Common myeloid progenitor, CD34-positive (primary cell): ENCODE measurements at regions of chr4 and their contacts with region 1.

Region 1: GRCh38 chr4:88211473-88212252 is 53.2 kb upstream of the ABCG2 start:
- DNase-seq: peak; percentile 61 to 81 (median 72)
- H3K4me3 ChIP-seq: no peak overlapping the region
- H3K27ac ChIP-seq: no peak overlapping the region
- H3K4me1 ChIP-seq: peaks cover 0 to 30% (median 10%) of the 10 kb centered on the region in 4 experiments
- H3K27me3 ChIP-seq: no peaks in the 10 kb centered on the region

Region 2: DNA sequence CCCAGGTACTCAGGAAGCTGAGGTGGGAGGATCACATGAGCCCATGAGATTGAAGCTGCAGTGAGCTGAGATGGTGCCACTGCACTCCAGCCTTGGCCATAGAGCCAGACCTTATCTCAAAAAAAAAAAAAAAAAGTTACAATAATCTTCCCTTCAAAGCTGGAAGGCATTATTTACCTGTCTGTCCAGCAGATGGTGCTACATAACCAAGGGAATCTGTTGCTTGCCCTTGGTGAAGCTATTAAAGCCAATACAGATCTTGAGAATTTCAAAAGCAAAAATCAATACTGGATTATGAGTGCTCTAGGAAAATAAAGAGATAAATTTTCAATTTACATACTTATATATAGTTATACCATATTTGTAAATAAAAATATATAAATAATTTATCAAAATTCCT is 178.4 kb before region 1 on chr4:
- CTCF ChIA-PET with region 1: interaction called, 46 read pairs
- POLR2A ChIA-PET with region 1: no interaction called
- DNase-seq: peak; percentile 76 to 84 (median 80)
- H3K4me3 ChIP-seq: no peak overlapping the region
- H3K27ac ChIP-seq: no peak overlapping the region
- H3K4me1 ChIP-seq: peaks cover 0 to 7% (median 3%) of the 10 kb centered on the region in 4 experiments
- H3K27me3 ChIP-seq: no peaks in the 10 kb centered on the region

Region 3: GRCh38 chr4:88043001-88043400 is 168.7 kb before region 1 on chr4:
- CTCF ChIA-PET with region 1: interaction called, 15 read pairs
- POLR2A ChIA-PET with region 1: no interaction called
- DNase-seq: peak in 1 of 3 donors; percentile 37
- H3K4me3 ChIP-seq: no peak overlapping the region
- H3K27ac ChIP-seq: no peak overlapping the region
- H3K4me1 ChIP-seq: peaks cover 2 to 21% (median 12%) of the 10 kb centered on the region in 4 experiments
- H3K27me3 ChIP-seq: no peaks in the 10 kb centered on the region

Region 4: DNA sequence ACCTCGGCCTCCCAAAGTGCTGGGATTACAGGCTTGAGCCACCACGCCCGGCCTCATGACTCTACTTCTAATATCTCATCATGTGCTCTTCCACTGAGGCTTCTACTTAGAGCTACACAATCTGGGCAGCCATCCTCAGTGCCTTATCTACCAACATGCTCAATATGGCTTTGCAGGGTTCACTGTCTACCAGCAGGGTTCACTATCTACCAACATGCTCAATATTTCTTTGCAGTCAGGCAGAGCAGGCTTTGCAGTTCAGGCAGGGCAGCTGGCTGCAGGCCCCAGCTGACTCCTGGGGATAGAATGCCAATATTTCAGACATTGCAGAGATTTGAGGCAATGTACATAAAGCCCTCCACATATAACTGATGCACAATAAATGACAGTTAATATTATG is 156.8 kb before region 1 on chr4:
- CTCF ChIA-PET with region 1: interaction called, 171 read pairs
- POLR2A ChIA-PET with region 1: no interaction called
- DNase-seq: peak; percentile 17 to 68 (median 68)
- H3K4me3 ChIP-seq: no peak overlapping the region
- H3K27ac ChIP-seq: no peak overlapping the region
- H3K4me1 ChIP-seq: peaks cover 0 to 3% (median 0%) of the 10 kb centered on the region in 4 experiments
- H3K27me3 ChIP-seq: no peaks in the 10 kb centered on the region

Region 5: GRCh38 chr4:88257726-88258125 is 46.1 kb after region 1 on chr4:
- CTCF ChIA-PET with region 1: no interaction called
- POLR2A ChIA-PET with region 1: no interaction called
- DNase-seq: no peak
- H3K4me3 ChIP-seq: no peak overlapping the region
- H3K27ac ChIP-seq: no peak overlapping the region
- H3K4me1 ChIP-seq: no peaks in the 10 kb centered on the region
- H3K27me3 ChIP-seq: no peaks in the 10 kb centered on the region

Region 6: GRCh38 chr4:88442703-88443191 is 231.1 kb after region 1 on chr4:
- CTCF ChIA-PET with region 1: no interaction called
- POLR2A ChIA-PET with region 1: no interaction called
- DNase-seq: no peak
- H3K4me3 ChIP-seq: no peak overlapping the region
- H3K27ac ChIP-seq: no peak overlapping the region
- H3K4me1 ChIP-seq: no peaks in the 10 kb centered on the region
- H3K27me3 ChIP-seq: no peaks in the 10 kb centered on the region

Region 7: DNA sequence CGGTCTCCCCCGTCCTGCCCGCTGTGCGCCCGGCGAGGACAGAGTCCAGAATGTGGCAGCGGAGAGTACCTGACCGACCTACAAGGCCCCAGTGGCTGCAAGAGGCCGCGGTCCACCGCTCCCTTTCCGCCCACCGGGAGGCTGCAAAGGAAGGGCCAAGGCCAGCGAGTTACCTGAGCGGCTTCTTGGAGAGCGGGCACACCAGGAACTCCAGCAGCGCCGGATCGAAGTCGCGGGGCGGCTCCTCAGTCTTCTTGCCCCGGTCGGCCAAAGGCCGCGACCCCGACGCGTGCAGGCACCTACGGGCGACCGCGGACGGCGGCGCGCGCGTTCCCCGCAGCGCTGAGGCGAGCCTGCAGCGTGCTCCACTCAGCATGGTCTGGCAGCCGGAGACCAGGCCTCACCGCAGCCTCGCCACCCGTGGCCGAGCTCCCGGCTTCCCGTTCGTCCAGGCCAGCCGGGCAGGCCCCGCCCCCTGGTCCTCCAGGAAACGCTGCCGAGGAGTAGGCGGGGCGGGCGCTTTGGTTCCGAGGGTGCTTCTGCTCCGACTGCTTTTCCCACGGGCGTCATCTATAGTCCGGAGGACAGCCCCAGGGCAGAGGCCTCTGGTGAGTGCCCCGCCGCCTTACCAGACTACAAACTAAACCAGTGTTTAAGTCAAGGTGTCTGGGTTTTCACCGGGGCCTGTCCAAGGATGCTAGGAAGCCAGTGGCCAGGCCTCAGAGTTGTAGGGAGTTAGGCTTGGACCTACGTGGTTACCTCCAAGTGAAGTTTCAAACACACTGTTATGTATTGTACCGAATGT is 311.9 kb after region 1 on chr4 and contains the start of gene PYURF:
- CTCF ChIA-PET with region 1: interaction called, 228 read pairs
- POLR2A ChIA-PET with region 1: interaction called, 3 read pairs
- DNase-seq: peak; percentile 79 to 85 (median 82)
- H3K4me3 ChIP-seq: peak within 1 kb of the TSS; percentile 61 to 96 (median 88)
- H3K27ac ChIP-seq: peak within 1 kb of the TSS; percentile 71 to 88
- H3K4me1 ChIP-seq: peaks cover 10 to 41% (median 18%) of the 10 kb centered on the region in 4 experiments
- H3K27me3 ChIP-seq: no peaks in the 10 kb centered on the region